Activated T-helper 1 cell treated with anti-CD3 and anti-CD28 coated beads, Interleukin-12 subunit alpha, Interleukin-12 subunit beta, Interleukin-2, Interleukin-4 antibody, amounts not matched to agents 30 ng/mL and 10 ng/mL and 1 ng/mL, durations not matched to agents 14 hours and 24 hours and 36 hours (primary cell): ENCODE measurements at regions of chr1 and their contacts with region 1.

Region 1: GRCh38 chr1:26391450-26391849 is 18.9 kb upstream of the ZNF683 start:
- DNase-seq: peak; percentile 36
- H3K4me3 Mint-ChIP-seq: no peak overlapping the region
- H3K27ac Mint-ChIP-seq: no peak overlapping the region
- H3K4me1 Mint-ChIP-seq: peaks cover 42% of the 10 kb centered on the region
- H3K27me3 Mint-ChIP-seq: peaks cover 3% of the 10 kb centered on the region

Region 2: GRCh38 chr1:25599969-25600610 is 791.4 kb before region 1 on chr1:
- intact Hi-C with region 1: no loop called
- DNase-seq: no peak
- H3K4me3 Mint-ChIP-seq: no peak overlapping the region
- H3K27ac Mint-ChIP-seq: no peak overlapping the region
- H3K4me1 Mint-ChIP-seq: no peaks in the 10 kb centered on the region
- H3K27me3 Mint-ChIP-seq: peaks cover 42% of the 10 kb centered on the region

Region 3: GRCh38 chr1:26102526-26102925 is 288.9 kb before region 1 on chr1:
- intact Hi-C with region 1: loop called (anchors 1 kb)
- DNase-seq: no peak
- H3K4me3 Mint-ChIP-seq: no peak overlapping the region
- H3K27ac Mint-ChIP-seq: no peak overlapping the region
- H3K4me1 Mint-ChIP-seq: peaks cover 14% of the 10 kb centered on the region
- H3K27me3 Mint-ChIP-seq: peaks cover 9% of the 10 kb centered on the region

Region 4: DNA sequence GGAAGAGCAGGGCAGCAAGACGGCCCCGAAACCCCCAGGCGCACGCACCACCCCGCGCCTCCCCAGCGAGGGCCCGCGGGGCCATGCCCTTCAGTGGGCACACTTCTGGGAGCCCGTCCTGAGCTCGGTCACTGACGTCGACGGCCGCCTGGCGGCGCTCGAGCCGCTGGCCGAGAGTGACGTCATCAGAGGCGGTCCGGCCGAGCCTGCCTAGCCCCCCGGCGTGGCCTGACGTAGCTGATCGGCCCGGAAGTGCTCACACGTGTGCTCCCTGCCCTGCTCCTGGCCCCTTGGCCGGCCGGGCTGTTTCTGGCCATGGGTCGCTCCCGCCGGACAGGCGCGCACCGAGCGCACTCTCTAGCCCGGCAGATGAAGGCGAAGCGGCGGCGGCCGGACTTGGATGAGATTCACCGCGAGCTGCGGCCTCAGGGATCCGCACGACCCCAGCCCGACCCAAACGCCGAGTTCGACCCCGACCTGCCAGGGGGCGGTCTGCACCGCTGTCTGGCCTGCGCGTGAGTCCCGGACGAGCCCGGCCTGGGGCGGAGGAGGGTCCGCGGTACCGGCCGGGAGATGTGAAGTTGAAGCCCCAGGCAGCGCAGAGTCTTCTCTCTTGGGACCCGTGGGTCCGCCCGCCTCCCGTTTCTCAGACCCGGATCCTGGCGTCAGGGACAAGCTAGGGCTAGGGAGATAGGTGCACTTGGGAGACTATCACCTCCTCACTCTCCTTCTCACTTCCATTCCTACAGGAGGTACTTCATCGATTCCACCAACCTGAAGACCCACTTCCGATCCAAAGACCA is 221.6 kb before region 1 on chr1 and contains the start of gene ZNF593:
- intact Hi-C with region 1: loop called (anchors 1 kb)
- DNase-seq: peak; percentile 85
- H3K4me3 Mint-ChIP-seq: peak within 1 kb of the TSS; percentile 92
- H3K27ac Mint-ChIP-seq: peak within 1 kb of the TSS; percentile 88
- H3K4me1 Mint-ChIP-seq: peaks cover 29% of the 10 kb centered on the region
- H3K27me3 Mint-ChIP-seq: peaks cover 17% of the 10 kb centered on the region
- total RNA-seq, gene ZNF593: 81.3 and 83.0 TPM in 2 replicates

Region 5: GRCh38 chr1:26284597-26285360 is 106.7 kb before region 1 on chr1:
- intact Hi-C with region 1: loop called (anchors 2 kb)
- DNase-seq: peak; percentile 88
- H3K4me3 Mint-ChIP-seq: peak overlapping the region; percentile 81
- H3K27ac Mint-ChIP-seq: peak overlapping the region; percentile 97
- H3K4me1 Mint-ChIP-seq: peaks cover 70% of the 10 kb centered on the region
- H3K27me3 Mint-ChIP-seq: no peaks in the 10 kb centered on the region

Region 6: DNA sequence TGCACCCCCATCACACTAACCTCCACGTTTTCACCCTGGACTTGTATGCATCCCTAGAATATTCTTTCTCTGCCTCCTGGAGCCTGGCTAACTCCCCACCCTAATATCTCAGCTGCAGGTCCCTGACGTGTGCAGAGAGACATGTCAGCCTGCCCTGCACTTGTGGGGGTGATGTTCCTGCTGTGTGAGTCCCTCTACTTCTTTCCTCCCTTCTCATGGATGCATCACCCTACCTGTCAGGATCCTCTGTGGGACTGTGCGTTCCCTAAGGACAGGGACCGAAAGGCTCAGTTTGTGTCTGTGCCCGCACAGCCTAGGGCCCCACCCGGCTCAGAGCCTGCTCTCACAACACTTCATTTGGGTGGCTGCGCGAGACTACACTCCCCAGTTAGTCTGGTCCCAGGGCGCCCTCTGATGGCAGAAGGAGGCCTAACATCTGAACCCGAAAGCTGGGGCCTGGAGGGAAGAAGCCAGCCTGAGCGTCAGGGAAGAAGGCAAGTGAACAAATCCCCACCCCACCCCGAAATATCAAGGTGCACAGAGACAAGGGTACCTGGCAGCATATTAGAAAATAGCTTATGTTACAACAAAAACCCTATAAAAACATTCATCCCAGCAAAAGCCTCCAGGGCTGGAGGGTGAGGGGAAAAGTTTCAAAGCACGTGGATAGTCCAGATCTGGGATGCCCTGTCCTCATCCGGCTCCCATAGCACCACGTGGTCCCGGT is 70.0 kb before region 1 on chr1:
- intact Hi-C with region 1: loop called (anchors 1 kb)
- DNase-seq: peak; percentile 88
- H3K4me3 Mint-ChIP-seq: peak overlapping the region; percentile 85
- H3K27ac Mint-ChIP-seq: peak overlapping the region; percentile 94
- H3K4me1 Mint-ChIP-seq: peaks cover 55% of the 10 kb centered on the region
- H3K27me3 Mint-ChIP-seq: no peaks in the 10 kb centered on the region

Region 7: DNA sequence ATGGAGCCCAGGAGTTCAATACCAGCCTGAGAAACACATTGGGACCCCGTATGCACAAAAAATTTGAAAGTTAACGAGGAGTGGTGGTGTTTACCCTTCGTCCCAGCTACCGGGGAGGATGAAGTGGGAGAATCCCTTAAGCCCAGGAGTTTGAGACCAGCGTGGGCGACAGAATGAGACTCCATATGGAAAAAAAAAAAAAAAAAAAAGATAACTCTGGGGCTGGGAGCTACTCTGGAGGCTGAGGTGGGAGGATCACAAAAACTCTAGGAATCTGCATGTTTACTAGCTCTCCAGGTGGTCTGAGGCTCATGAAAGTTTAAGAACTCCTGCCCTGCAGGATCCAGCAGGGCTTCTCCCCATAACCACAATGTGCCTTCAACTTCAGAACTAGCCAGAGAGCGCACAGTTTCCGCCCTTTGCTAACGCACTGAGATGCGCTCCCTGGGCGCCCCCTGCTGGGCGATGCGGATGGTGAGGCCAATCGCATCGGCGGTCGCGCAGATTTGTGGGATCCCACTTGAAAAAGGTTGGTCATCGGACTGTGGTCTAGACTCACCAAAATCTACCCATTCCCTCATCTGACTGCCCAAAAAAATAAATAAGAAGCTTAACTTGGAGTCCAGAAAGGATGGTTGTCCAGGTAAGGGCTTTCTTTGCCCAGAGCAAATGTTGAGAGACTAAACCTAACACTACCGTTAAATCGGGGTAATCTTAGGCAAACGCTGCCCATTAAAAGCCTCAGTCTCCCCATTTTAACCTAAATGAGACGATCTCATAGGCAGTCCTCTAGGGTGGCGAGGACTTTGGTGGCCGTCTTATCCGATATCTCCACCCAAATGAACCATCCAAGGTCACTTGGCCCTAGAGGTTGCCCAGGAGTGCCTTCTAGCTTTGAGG is 27.7 kb before region 1 on chr1:
- intact Hi-C with region 1: loop called (anchors 2 kb)
- DNase-seq: peak; percentile 74
- H3K4me3 Mint-ChIP-seq: no peak overlapping the region
- H3K27ac Mint-ChIP-seq: no peak overlapping the region
- H3K4me1 Mint-ChIP-seq: peaks cover 46% of the 10 kb centered on the region
- H3K27me3 Mint-ChIP-seq: peaks cover 39% of the 10 kb centered on the region

Region 8: GRCh38 chr1:26378088-26378878 is 13.2 kb before region 1 on chr1:
- intact Hi-C with region 1: loop called (anchors 1 kb)
- DNase-seq: peak; percentile 82
- H3K4me3 Mint-ChIP-seq: peak overlapping the region; percentile 69
- H3K27ac Mint-ChIP-seq: peak overlapping the region; percentile 76
- H3K4me1 Mint-ChIP-seq: peaks cover 66% of the 10 kb centered on the region
- H3K27me3 Mint-ChIP-seq: peaks cover 3% of the 10 kb centered on the region